A673 (cell line): ENCODE measurements at regions of chrX and their contacts with region 1.

Region 1: DNA sequence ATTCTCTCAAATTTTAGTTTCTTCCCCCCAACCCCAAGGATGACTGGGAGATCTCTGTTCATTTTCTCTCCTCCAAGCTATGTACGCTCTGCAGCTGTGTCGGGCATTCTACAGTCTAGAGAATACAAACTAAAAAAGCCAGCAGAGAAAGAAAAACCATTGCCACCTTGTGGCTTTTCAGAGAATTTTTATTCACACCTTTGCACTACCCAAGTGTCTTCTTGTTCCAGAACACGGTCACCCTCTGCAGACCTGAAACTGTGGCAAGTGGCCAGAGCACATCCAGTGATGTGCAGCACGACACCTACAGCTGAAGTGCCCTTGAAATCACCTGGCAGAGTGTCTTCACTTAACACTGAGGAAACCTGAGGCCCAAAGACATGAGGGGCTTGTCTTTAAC is 68.6 kb downstream of the CHST7 start:
- DNase-seq: peak; percentile 65
- H3K4me3 ChIP-seq: no peak overlapping the region
- H3K27ac ChIP-seq: no peak overlapping the region
- H3K4me1 ChIP-seq: peaks cover 4% of the 10 kb centered on the region
- H3K27me3 ChIP-seq: no peaks in the 10 kb centered on the region
- CTCF ChIP-seq: peak; percentile 53

Region 2: DNA sequence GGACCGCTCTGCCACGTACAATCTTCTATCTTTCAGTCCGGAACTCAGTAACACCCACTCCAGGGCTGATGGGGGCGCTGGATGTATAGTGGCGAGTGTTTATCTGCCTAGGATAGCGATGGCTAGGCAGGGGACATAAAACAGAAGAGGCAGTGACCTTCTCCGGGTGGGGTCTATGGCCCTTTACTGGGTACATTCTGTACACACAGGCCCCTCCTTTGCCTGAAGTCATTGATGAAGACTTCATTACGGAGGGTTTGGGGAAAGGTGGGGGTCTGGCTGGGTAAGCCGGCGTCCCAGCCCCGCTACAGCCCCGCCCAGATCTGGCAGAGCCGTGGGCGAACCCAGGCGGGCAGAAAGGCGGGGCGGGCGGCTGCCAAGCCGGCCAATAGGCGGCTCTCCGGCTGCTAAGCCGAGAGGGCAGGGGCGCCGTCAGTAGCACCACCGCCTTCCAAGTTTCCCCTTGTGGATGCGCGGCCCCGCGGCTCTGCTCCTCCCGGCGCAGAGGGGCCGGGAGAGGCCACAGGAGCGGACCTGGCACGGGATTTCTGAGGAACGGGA is 68.7 kb before region 1 on chrX and contains the start of gene CHST7:
- CTCF ChIA-PET with region 1: no interaction called
- POLR2A ChIA-PET with region 1: no interaction called
- intact Hi-C with region 1: loop called (anchors 2 kb)
- DNase-seq: peak; percentile 84
- H3K4me3 ChIP-seq: peak within 1 kb of the TSS; percentile 58
- H3K27ac ChIP-seq: no peak within 1 kb of the TSS
- H3K4me1 ChIP-seq: peaks cover 21% of the 10 kb centered on the region
- H3K27me3 ChIP-seq: no peaks in the 10 kb centered on the region
- CTCF ChIP-seq: peak; percentile 61
- total RNA-seq, gene CHST7: 5.7 and 6.1 TPM in 2 replicates